ENCODE measurements at regions of chr19 and their contacts with region 1.

Region 1: DNA sequence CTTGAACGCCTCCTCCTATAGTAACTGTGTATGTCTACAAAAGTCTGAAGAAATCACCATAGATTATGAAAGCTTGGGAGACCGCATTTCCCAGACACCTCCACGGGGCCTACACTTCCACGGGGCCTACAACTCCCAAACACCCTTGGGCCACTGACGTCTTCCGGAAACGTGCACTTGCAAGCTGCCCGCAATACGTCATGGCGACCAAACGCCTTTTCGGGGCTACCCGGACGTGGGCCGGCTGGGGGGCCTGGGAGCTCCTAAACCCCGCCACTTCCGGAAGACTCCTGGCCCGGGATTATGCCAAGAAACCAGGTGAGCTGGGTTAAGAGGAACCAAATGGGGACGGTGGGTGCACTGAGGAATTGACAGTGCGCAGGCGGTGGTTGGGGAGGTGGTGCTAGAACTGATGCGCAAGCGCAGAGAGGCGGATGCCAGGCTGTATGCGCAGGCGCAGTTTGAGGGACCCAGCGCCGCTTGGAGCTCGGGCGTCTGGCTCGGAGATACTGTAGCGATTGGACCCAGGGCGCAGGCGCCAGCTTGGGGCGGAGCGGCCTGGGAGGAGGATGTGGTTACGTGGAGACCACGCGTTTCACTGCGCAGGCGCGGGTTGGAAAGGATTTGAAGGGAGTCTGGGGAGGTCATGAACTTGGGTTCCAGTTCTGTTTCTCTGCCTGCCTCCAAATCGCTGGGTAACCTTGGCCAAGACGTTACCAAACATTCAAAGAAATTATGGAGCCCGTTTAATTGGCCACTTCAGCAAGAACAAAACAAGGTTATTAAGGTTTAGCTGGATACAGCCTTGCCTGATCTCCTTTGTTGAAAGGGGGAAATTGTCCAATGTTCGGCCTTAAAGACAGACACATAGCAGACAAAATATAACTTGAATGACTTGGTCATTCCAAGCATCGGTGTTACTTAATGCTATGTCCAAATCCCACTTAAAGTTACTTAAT is at the start of gene MRPL54:
- DNase-seq: peak; percentile 99
- H3K4me3 Mint-ChIP-seq: peak within 1 kb of the TSS; percentile 99
- H3K27ac Mint-ChIP-seq: peak within 1 kb of the TSS; percentile 98
- H3K4me1 Mint-ChIP-seq: peaks cover 41% of the 10 kb centered on the region
- H3K27me3 Mint-ChIP-seq: no peaks in the 10 kb centered on the region
- total RNA-seq, gene MRPL54: 71.4 to 77.0 TPM

Region 2: DNA sequence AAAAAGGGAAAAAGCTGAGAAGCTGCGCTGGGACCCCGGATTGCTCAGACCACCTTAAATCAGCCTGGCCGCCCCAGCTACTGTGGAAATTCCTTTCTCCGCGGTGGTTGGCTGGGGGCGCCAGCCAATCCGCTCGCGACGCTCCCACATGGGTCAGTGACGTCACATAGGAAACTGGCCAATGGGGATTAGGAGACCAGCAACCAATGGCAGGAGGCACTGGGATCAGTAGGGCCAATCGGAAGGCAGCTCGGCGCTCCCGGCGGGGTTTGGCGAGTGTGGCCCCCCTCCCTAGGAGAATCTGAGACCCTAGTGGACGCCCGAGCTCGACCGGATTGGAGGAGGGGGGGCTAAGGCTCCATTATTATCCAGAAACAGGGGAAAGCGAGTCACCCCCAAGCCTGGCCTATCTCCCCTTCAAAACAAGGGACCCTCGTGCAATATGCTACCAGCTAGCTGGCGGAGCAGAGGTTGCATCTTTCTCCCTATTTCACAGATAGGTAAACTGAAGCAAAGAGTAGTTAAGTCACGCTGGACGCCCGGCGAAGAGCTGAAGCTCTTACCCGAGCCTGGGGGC is 727.1 kb before region 1 on chr19:
- CTCF ChIA-PET with region 1: no interaction called
- intact Hi-C with region 1: loop called (anchors 5 kb)
- DNase-seq: peak; percentile 98
- H3K4me3 Mint-ChIP-seq: peak overlapping the region; percentile 87
- H3K27ac Mint-ChIP-seq: peak overlapping the region; percentile 94
- H3K4me1 Mint-ChIP-seq: peaks cover 19% of the 10 kb centered on the region
- H3K27me3 Mint-ChIP-seq: no peaks in the 10 kb centered on the region

Region 3: GRCh38 chr19:3359015-3359918 is 403.5 kb before region 1 on chr19:
- CTCF ChIA-PET with region 1: no interaction called
- intact Hi-C with region 1: no loop called
- DNase-seq: peak; percentile 63
- H3K4me3 Mint-ChIP-seq: peak overlapping the region; percentile 75
- H3K27ac Mint-ChIP-seq: peak overlapping the region; percentile 61
- H3K4me1 Mint-ChIP-seq: peaks cover 32% of the 10 kb centered on the region
- H3K27me3 Mint-ChIP-seq: peaks cover 8% of the 10 kb centered on the region

Region 4: GRCh38 chr19:3626473-3627350 is 136.1 kb before region 1 on chr19 and contains the start of gene CACTIN:
- CTCF ChIA-PET with region 1: no interaction called
- intact Hi-C with region 1: loop called (anchors 2 kb)
- DNase-seq: peak; percentile 99
- H3K4me3 Mint-ChIP-seq: peak within 1 kb of the TSS; percentile 79
- H3K27ac Mint-ChIP-seq: peak within 1 kb of the TSS; percentile 98
- H3K4me1 Mint-ChIP-seq: peaks cover 29% of the 10 kb centered on the region
- H3K27me3 Mint-ChIP-seq: no peaks in the 10 kb centered on the region
- total RNA-seq, gene CACTIN: 24.6 to 27.0 TPM

Region 5: DNA sequence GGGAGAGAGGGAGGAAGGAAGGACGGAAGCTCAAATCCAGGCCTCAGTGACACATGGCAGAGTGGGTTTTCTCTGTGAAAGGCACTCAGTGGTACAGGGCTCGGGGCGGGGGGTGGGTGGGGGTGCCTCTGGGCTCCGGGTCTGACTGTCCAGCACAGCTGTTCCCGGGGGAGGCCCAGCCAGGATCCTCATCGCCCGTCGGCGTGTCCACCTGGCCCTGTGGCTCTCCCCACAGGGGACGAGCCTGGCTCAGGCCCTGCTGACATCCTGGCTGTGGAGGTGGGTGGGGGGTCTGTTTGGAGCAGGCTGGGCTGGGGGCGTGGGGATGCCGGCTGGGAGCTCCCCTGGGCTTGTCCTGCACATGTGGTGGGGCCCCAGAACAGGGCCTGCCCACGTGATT is 41.6 kb after region 1 on chr19:
- CTCF ChIA-PET with region 1: no interaction called
- intact Hi-C with region 1: no loop called
- DNase-seq: no peak
- H3K4me3 Mint-ChIP-seq: no peak overlapping the region
- H3K27ac Mint-ChIP-seq: no peak overlapping the region
- H3K4me1 Mint-ChIP-seq: peaks cover 13% of the 10 kb centered on the region
- H3K27me3 Mint-ChIP-seq: no peaks in the 10 kb centered on the region

Region 6: GRCh38 chr19:3821857-3822364 is 59.1 kb after region 1 on chr19:
- CTCF ChIA-PET with region 1: interaction called, 15 read pairs
- intact Hi-C with region 1: loop called (anchors 1 kb)
- DNase-seq: peak; percentile 91
- H3K4me3 Mint-ChIP-seq: no peak overlapping the region
- H3K27ac Mint-ChIP-seq: no peak overlapping the region
- H3K4me1 Mint-ChIP-seq: peaks cover 30% of the 10 kb centered on the region
- H3K27me3 Mint-ChIP-seq: no peaks in the 10 kb centered on the region

Region 7: GRCh38 chr19:4065430-4066175 is 302.8 kb after region 1 on chr19:
- CTCF ChIA-PET with region 1: no interaction called
- intact Hi-C with region 1: loop called (anchors 5 kb)
- DNase-seq: peak; percentile 96
- H3K4me3 Mint-ChIP-seq: peak overlapping the region; percentile 56
- H3K27ac Mint-ChIP-seq: no peak overlapping the region
- H3K4me1 Mint-ChIP-seq: peaks cover 36% of the 10 kb centered on the region
- H3K27me3 Mint-ChIP-seq: no peaks in the 10 kb centered on the region

Region 8: DNA sequence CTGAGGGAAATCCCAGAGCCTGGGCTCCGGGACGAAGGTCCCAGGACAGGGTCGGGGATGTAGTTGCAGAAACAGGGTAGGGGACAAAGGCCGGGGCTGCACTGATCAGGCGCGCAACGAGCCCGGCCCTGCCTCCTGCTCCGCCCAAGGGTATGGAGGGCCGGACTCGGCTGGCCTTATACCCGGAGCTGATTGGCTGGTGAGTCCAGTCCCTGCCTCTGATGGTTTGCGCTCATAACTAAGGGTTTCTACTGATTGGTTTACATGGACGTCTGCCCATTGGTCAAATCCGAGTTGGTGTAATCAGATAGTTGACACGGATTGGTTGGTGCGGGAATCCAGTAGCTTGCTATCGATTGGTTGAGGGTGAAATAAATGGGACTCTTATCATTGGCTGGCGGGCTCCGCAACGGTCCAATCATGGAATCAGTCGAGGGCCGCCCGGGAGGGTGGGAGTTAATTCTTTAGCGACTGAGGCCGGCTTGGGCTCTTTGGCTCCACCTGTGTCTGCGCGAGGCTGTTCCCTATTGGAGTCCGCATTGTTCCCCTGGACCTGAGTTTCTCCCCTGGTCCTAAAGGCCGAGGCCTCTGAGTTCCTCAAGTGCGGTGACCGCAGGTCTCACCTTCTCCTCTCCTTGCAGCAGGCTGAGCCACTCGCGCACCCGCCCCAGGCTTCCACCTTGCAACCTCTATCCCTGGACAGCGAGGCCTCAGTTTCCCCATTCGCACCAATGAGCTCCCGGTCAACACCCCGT is 580.0 kb after region 1 on chr19:
- CTCF ChIA-PET with region 1: no interaction called
- intact Hi-C with region 1: loop called (anchors 2 kb)
- DNase-seq: peak; percentile 97
- H3K4me3 Mint-ChIP-seq: peak overlapping the region; percentile 94
- H3K27ac Mint-ChIP-seq: peak overlapping the region; percentile 94
- H3K4me1 Mint-ChIP-seq: peaks cover 27% of the 10 kb centered on the region
- H3K27me3 Mint-ChIP-seq: no peaks in the 10 kb centered on the region

Region 9: GRCh38 chr19:4916292-4917082 is 1153.7 kb after region 1 on chr19:
- CTCF ChIA-PET with region 1: no interaction called
- intact Hi-C with region 1: loop called (anchors 5 kb)
- DNase-seq: peak; percentile 55
- H3K4me3 Mint-ChIP-seq: peak overlapping the region; percentile 75
- H3K27ac Mint-ChIP-seq: peak overlapping the region; percentile 88
- H3K4me1 Mint-ChIP-seq: peaks cover 56% of the 10 kb centered on the region
- H3K27me3 Mint-ChIP-seq: no peaks in the 10 kb centered on the region